ENCODE measurements at regions of chr11 and their contacts with region 1.

Region 1: GRCh38 chr11:27485930-27486773 is 13.6 kb upstream of the LGR4 start:
- DNase-seq: peak; percentile 47
- ATAC-seq: no peak
- H3K4me3 Mint-ChIP-seq: no peak overlapping the region
- H3K27ac Mint-ChIP-seq: no peak overlapping the region
- H3K4me1 Mint-ChIP-seq: no peaks in the 10 kb centered on the region
- H3K27me3 Mint-ChIP-seq: no peaks in the 10 kb centered on the region
- CTCF ChIP-seq: peak; percentile 87

Region 2: DNA sequence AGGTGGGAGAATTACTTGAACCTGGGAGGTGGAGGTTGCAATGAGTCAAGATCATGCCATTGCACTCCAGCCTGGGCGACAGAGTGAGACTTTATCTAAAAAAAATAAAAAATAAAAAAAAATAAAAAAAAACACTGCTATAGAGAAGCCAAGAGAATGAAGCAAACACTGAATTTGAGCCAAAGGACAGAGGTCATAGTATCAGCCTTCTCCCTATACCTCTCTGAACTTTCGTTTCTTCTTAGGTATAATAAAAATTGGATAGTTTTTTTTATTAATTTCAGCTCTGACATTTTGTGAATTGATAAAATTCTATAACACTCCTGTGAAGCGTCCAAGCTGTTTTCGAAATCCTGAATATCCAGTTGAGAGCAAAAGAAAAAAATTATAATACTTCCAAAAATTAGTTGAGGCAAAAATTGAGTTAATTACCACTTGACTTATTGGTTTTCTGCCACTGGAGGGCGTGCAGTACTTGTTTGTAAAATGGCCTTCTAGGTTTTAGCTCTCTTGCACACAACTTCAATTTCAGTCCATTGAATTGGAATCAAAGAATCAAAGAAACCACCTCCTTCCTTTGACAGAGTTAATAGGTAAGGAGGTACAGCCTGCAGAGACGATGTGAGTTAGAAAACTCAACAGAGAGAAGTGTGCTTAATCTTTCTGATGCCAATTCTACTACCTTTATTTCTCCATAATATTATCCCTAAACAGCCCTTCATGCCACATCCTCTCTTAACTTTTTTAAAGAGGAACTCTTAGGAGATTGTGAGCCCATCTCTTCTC is 302.3 kb before region 1 on chr11:
- CTCF ChIA-PET with region 1: interaction called, 103 read pairs
- POLR2A ChIA-PET with region 1: no interaction called
- intact Hi-C with region 1: loop called (anchors 1 kb)
- DNase-seq: peak; percentile 63
- ATAC-seq: no peak
- H3K4me3 Mint-ChIP-seq: no peak overlapping the region
- H3K27ac Mint-ChIP-seq: no peak overlapping the region
- H3K4me1 Mint-ChIP-seq: no peaks in the 10 kb centered on the region
- H3K27me3 Mint-ChIP-seq: peaks cover 2% of the 10 kb centered on the region
- CTCF ChIP-seq: peak; percentile 72

Region 3: DNA sequence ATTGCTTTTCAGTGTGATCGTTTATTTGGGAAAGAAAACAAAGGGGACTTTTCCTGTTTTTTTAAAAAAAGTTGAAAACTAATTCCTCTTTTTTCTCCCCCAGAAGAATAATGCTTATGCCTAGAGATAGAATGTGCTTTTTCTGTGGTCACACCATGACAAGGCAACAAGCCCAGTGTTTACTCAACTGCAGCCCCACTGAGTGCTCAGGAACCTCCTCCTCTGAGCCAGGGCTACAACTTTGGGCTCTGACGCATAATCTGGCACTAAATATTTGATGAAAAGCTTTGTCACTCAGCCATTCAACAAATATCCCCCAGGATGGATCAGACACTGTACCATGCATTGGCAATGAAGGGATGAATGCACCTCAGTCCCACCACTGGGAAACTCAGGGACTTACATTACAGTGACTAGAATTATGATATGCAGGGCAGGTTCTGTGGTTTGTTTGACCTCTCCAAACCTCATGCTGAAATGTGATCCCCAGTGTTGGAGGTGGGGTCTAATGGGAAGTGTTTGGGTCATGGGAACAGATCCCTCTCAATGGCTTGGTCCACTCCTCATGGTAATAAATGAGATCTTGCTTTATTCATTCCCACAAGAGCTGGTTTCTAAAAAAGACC is 279.0 kb before region 1 on chr11:
- CTCF ChIA-PET with region 1: interaction called, 11 read pairs
- POLR2A ChIA-PET with region 1: interaction called, 3 read pairs
- intact Hi-C with region 1: no loop called
- DNase-seq: no peak
- ATAC-seq: no peak
- H3K4me3 Mint-ChIP-seq: no peak overlapping the region
- H3K27ac Mint-ChIP-seq: no peak overlapping the region
- H3K4me1 Mint-ChIP-seq: no peaks in the 10 kb centered on the region
- H3K27me3 Mint-ChIP-seq: peaks cover 6% of the 10 kb centered on the region
- CTCF ChIP-seq: no peak

Region 4: DNA sequence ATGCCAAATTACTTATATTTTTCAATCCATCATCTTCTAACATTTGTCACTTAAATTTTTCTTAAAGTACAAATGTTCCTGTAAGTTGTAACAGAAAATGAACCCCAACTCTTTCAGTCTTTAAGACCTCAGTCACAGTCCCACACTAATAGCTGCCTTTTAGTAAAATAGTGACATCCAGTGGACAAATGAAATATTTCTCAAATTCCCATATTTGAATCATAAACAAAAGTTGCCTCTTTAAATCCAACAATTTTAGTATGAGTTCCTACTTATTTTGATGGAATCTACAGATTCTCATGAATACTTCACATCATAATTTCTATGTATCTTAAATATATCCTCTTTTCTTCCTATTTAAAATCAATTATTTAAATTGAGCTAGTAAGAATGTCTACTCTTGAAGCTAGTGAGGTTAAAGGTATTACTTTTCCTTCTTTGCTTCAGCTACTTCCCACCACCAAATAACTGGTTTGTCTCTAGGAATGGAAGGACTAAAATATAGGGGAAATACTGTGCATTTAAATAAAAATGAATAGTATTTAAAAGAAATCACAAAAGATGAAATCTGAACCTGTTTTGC is 11.2 kb after region 1 on chr11:
- CTCF ChIA-PET with region 1: interaction called, 117 read pairs
- POLR2A ChIA-PET with region 1: interaction called, 4 read pairs
- intact Hi-C with region 1: no loop called
- DNase-seq: no peak
- ATAC-seq: peak; percentile 53
- H3K4me3 Mint-ChIP-seq: no peak overlapping the region
- H3K27ac Mint-ChIP-seq: no peak overlapping the region
- H3K4me1 Mint-ChIP-seq: peaks cover 19% of the 10 kb centered on the region
- H3K27me3 Mint-ChIP-seq: no peaks in the 10 kb centered on the region
- CTCF ChIP-seq: peak; percentile 56

Region 5: DNA sequence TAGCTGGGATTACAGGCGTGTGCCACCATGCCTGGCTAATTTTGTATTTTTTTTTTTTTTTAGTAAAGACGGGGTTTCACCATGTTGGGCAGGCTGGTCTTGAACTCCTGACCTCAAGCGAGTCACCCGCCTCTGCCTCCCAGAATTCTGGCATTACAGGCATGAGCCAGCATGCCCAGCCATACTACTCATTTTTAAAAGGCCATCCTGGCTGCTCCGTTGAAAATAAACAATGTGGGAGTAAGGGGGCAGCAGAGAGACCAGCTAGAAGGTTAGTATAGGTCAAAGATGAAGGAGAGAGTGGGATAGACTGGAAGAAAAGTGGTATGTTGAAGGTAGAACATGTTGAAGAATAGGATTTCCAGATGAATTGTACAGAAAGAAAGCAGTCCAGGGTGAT is 38.0 kb after region 1 on chr11:
- CTCF ChIA-PET with region 1: no interaction called
- POLR2A ChIA-PET with region 1: no interaction called
- intact Hi-C with region 1: no loop called
- DNase-seq: no peak
- ATAC-seq: no peak
- H3K4me3 Mint-ChIP-seq: no peak overlapping the region
- H3K27ac Mint-ChIP-seq: no peak overlapping the region
- H3K4me1 Mint-ChIP-seq: no peaks in the 10 kb centered on the region
- H3K27me3 Mint-ChIP-seq: no peaks in the 10 kb centered on the region
- CTCF ChIP-seq: no peak

Region 6: GRCh38 chr11:27535103-27535502 is 49.0 kb after region 1 on chr11:
- CTCF ChIA-PET with region 1: no interaction called
- POLR2A ChIA-PET with region 1: no interaction called
- intact Hi-C with region 1: no loop called
- DNase-seq: no peak
- ATAC-seq: no peak
- H3K4me3 Mint-ChIP-seq: no peak overlapping the region
- H3K27ac Mint-ChIP-seq: no peak overlapping the region
- H3K4me1 Mint-ChIP-seq: no peaks in the 10 kb centered on the region
- H3K27me3 Mint-ChIP-seq: no peaks in the 10 kb centered on the region
- CTCF ChIP-seq: no peak

Region 7: DNA sequence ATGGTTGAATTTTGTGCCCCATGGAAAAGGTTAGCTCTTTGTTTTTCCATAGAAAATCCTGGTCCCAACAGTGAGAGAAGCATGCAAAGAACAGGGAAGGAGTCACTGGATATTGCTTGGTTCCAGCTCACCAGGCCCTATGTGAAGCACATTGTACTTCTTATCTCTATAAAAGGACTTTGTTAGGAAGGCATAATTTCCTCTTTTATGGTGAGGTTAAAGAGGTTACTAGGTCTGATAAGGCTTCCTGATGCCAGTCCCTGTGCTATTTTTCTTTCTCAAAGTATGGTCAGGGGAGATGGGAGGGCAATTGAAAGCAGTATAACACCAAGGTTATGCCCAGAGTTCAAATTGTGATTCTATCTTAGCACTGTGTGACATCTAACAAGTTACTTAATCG is 459.2 kb after region 1 on chr11:
- CTCF ChIA-PET with region 1: no interaction called
- POLR2A ChIA-PET with region 1: no interaction called
- intact Hi-C with region 1: no loop called
- DNase-seq: no peak
- ATAC-seq: no peak
- H3K4me3 Mint-ChIP-seq: no peak overlapping the region
- H3K27ac Mint-ChIP-seq: no peak overlapping the region
- H3K4me1 Mint-ChIP-seq: no peaks in the 10 kb centered on the region
- H3K27me3 Mint-ChIP-seq: peaks cover 2% of the 10 kb centered on the region
- CTCF ChIP-seq: no peak